ENCODE measurements at regions of chr3 and their contacts with region 1.

Region 1: DNA sequence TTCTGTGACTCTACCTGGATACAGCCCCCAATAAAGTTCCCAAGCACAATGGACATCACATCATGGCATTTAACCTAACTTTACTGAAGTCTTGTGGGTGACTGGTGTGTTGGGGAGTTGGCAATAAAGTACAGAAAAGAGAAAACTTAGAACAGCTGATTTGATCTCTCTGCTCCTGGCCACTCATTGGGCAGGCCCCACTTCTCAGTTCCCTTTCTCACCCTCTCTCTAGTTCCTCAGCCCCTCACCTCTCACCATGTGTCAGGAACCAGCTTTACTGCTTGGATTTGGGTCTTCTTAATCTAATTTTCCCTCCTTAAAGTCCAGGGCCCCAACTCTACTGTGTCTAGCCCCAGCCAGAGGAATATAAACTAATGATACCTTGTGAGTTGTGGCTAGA is 713 bp upstream of the MUC13 start:
- DNase-seq: no peak
- H3K4me3 ChIP-seq: no peak overlapping the region
- H3K27ac ChIP-seq: no peak overlapping the region
- H3K4me1 ChIP-seq: no peaks in the 10 kb centered on the region
- H3K27me3 ChIP-seq: no peaks in the 10 kb centered on the region; the same call in 1 of the 2 replicates

Region 2: GRCh38 chr3:125437631-125438435 is 502.6 kb after region 1 on chr3:
- in situ Hi-C with region 1: loop called (anchors 10 kb)
- DNase-seq: peak; percentile 59
- H3K4me3 ChIP-seq: no peak overlapping the region
- H3K27ac ChIP-seq: no peak overlapping the region
- H3K4me1 ChIP-seq: no peaks in the 10 kb centered on the region
- H3K27me3 ChIP-seq: no peaks in the 10 kb centered on the region